OCI-LY7 (cell line): ENCODE measurements at regions of chr1 and their contacts with region 1.

Region 1: DNA sequence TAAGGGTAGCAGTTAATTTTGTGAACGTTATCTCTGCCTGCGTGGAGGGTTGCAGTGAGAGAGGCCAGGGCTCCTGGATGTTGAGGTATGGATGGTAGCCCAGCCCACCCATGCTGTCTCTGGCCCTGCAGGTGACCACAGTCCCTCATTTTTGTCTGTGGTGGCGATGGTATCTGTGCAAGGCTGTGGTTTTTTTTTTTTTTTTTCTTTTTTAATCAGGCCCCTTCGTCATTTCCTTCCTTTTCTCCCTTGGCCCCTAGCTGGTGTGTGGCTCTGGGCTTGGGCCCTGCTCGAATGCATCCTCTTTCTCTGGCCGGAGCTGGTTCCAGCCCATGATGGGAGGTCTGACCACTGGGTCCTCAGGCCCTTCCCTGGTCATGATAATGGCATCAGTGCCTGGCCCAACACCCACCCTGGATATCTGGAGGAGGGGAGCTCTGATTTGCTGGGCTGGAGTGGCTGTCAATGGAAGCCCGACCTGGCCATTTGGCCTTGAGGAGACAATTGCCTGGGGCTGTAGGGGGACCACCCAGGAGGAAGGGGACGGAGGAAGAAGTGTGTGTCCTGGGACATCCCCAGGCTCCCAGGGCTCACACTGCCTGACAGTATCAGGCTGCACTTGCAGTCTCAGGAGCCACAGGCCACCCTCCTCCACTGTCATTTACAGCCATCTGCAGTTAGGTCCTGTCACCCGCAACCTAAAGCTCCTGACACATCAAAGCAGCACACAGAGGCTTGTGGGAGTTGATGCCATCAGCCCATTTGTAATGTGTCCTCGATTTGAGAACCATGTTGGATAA is 8.1 kb upstream of the RNF187 start:
- DNase-seq: peak; percentile 67
- H3K4me3 ChIP-seq: peak overlapping the region; percentile 44
- H3K27ac ChIP-seq: peak overlapping the region; percentile 53
- H3K4me1 ChIP-seq: peaks cover 28% of the 10 kb centered on the region
- CTCF ChIP-seq: no peak

Region 2: GRCh38 chr1:228464487-228464983 is 14.6 kb before region 1 on chr1:
- CTCF ChIA-PET with region 1: no interaction called
- POLR2A ChIA-PET with region 1: interaction called, 49 read pairs
- intact Hi-C with region 1: no loop called
- DNase-seq: peak; percentile 98
- H3K4me3 ChIP-seq: peak overlapping the region; percentile 95
- H3K27ac ChIP-seq: peak overlapping the region; percentile 95
- H3K4me1 ChIP-seq: peaks cover 55% of the 10 kb centered on the region
- CTCF ChIP-seq: no peak